CD8-positive, alpha-beta memory T cell (primary cell): ENCODE measurements at regions of chr12 and their contacts with region 1.

Region 1: DNA sequence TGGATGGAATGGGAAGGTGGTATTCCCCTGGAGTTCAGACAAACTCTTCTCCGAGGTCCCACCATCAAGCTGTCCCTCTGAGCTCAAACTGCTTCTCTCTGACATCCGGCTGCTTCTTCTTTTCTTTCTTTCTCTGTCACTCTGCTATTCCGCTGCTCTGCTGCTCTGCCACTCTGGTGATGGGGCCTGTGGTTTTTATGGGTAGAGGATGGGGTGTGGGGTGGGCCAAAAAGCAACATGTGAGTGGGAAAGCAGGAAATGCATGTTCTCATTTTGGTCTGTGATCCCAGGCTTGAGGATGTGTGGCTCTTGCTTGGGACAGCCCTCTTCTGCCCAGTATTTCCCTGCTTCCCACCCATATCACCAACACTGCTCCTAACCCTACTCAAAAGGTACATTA is 30.6 kb downstream of the CLECL1 start:
- DNase-seq: peak in 4 of 5 donors; percentile 28 to 76 (median 64)
- H3K4me3 ChIP-seq: peak overlapping the region; percentile 37
- H3K4me3 Mint-ChIP-seq: peak overlapping the region; percentile 68 to 88 (median 79)
- H3K27ac ChIP-seq: peak overlapping the region; percentile 33
- H3K27ac Mint-ChIP-seq: peak overlapping the region; percentile 78 to 98 (median 94)
- H3K4me1 ChIP-seq: peaks cover 62% of the 10 kb centered on the region
- H3K4me1 Mint-ChIP-seq: peaks cover 82 to 90% (median 87%) of the 10 kb centered on the region in 3 donors
- H3K27me3 ChIP-seq: no peaks in the 10 kb centered on the region
- H3K27me3 Mint-ChIP-seq: no peaks in the 10 kb centered on the region

Region 2: GRCh38 chr12:9687228-9687627 is 15.0 kb before region 1 on chr12:
- CTCF ChIA-PET with region 1: interaction called, 12 read pairs
- POLR2A ChIA-PET with region 1: interaction called, 8 read pairs
- DNase-seq: no peak
- H3K4me3 ChIP-seq: no peak overlapping the region
- H3K4me3 Mint-ChIP-seq: peak overlapping the region in 6 of 7 donors; percentile 3 to 73 (median 52)
- H3K27ac ChIP-seq: no peak overlapping the region
- H3K27ac Mint-ChIP-seq: peak overlapping the region in 7 of 8 donors; percentile 68 to 96 (median 74)
- H3K4me1 ChIP-seq: peaks cover 48% of the 10 kb centered on the region
- H3K4me1 Mint-ChIP-seq: peaks cover 64 to 89% (median 84%) of the 10 kb centered on the region in 3 donors
- H3K27me3 ChIP-seq: no peaks in the 10 kb centered on the region
- H3K27me3 Mint-ChIP-seq: peaks cover 0 to 1% of the 10 kb centered on the region in 2 donors